Mammary epithelial cell (primary cell): ENCODE measurements at regions of chr15 and their contacts with region 1.

Region 1: GRCh38 chr15:85168642-85169173 is 187.1 kb downstream of the PDE8A start:
- DNase-seq: peak; percentile 71
- H3K4me3 ChIP-seq: peak overlapping the region; percentile 28 to 54 (median 51)
- H3K27ac ChIP-seq: no peak overlapping the region
- H3K4me1 ChIP-seq: no peaks in the 10 kb centered on the region
- H3K27me3 ChIP-seq: no peaks in the 10 kb centered on the region
- CTCF ChIP-seq: peak; percentile 69 to 74

Region 2: GRCh38 chr15:85276911-85277310 is 108.2 kb after region 1 on chr15:
- CTCF ChIA-PET with region 1: no interaction called
- dilution Hi-C with region 1: no loop called
- in situ Hi-C with region 1: loop called in 1 of 2 experiments (anchors 10 kb)
- intact Hi-C with region 1: no loop called
- DNase-seq: no peak
- H3K4me3 ChIP-seq: no peak overlapping the region
- H3K27ac ChIP-seq: no peak overlapping the region
- H3K4me1 ChIP-seq: no peaks in the 10 kb centered on the region
- H3K27me3 ChIP-seq: no peaks in the 10 kb centered on the region
- CTCF ChIP-seq: no peak

Region 3: DNA sequence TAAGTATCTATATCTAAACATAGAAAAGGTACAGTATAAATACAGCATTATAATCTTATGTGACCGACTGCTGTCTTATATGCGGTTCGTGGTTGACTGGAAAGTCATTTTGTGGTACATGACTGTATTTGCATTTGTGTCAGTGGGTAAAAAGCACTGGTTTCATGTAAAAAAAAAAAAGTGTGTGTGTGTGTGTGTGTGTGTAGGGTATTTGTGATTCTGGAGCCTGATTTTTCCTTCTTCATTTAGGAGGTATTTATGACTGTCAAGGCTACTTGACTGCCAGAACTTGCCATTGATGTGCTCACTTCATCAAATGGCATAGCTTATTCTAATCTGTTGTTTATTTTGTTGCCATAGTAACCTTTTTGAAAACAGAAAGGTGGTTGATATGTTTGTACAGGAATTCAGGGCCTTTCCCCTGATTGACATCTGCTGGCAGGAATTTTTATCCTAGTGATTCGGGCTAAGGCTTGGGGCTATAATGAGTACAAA is 274.9 kb after region 1 on chr15:
- CTCF ChIA-PET with region 1: interaction called, 22 read pairs
- dilution Hi-C with region 1: no loop called
- in situ Hi-C with region 1: no loop called
- intact Hi-C with region 1: no loop called
- DNase-seq: peak; percentile 88
- H3K4me3 ChIP-seq: no peak overlapping the region
- H3K27ac ChIP-seq: peak overlapping the region; percentile 77
- H3K4me1 ChIP-seq: peaks cover 19% of the 10 kb centered on the region
- H3K27me3 ChIP-seq: no peaks in the 10 kb centered on the region
- CTCF ChIP-seq: peak in 1 of 2 donors; percentile 31

Region 4: DNA sequence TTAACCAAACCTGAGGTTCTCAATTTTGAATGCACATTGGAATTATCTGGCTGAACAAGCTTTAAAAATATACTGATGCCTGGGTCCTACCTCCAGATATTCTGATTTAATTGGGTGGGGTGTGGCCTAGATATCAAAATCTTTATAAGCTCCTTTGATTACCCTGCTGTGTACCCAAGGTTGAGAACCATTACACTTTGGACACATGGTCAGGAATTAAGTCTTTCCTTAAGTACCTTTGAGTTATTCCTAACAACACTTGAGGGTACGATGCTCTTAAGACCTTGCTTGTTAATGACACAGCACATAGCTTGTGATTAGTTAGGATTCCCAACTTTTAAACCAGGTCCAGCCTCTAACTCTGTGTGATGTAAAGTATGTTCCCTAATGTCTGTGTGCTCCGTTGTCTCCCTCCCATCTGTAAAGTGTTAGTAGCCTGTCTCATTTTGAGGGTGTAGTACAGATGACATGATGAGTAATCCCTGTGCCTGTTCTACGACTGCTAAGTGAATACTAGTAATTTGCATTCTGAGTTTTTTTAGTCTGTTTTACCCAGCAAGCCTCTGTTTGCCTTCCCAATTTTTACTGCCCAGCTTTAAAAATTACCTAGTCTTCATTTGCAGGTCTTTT is 471.2 kb after region 1 on chr15:
- CTCF ChIA-PET with region 1: no interaction called
- dilution Hi-C with region 1: no loop called
- in situ Hi-C with region 1: no loop called
- intact Hi-C with region 1: no loop called
- DNase-seq: peak; percentile 48
- H3K4me3 ChIP-seq: no peak overlapping the region
- H3K27ac ChIP-seq: no peak overlapping the region
- H3K4me1 ChIP-seq: peaks cover 4% of the 10 kb centered on the region
- H3K27me3 ChIP-seq: no peaks in the 10 kb centered on the region
- CTCF ChIP-seq: no peak